HAP-1 (cell line): ENCODE measurements at regions of chrX and their contacts with region 1.

Region 1: DNA sequence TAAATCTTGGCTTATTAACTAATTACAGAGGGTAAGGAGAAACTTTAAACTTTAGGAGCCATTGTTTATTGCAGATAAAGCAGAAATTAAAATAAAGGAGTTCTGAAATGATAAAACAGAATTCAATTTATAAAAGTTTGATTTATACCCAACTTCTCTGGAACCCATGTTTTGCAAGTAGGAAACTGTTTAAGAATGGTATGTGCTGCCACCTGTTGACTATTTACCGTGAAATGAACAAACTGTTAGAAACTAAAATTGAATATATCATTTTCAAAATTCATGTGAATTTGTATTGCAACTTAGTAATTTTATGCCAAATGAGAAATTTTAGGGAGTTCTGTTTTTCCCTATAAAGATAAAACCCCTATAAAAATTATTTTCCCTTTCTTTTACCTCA is 11.0 kb upstream of the TBC1D8B start:
- DNase-seq: no peak
- H3K4me3 ChIP-seq: no peak overlapping the region
- H3K4me1 ChIP-seq: no peaks in the 10 kb centered on the region
- H3K27me3 ChIP-seq: no peaks in the 10 kb centered on the region

Region 2: DNA sequence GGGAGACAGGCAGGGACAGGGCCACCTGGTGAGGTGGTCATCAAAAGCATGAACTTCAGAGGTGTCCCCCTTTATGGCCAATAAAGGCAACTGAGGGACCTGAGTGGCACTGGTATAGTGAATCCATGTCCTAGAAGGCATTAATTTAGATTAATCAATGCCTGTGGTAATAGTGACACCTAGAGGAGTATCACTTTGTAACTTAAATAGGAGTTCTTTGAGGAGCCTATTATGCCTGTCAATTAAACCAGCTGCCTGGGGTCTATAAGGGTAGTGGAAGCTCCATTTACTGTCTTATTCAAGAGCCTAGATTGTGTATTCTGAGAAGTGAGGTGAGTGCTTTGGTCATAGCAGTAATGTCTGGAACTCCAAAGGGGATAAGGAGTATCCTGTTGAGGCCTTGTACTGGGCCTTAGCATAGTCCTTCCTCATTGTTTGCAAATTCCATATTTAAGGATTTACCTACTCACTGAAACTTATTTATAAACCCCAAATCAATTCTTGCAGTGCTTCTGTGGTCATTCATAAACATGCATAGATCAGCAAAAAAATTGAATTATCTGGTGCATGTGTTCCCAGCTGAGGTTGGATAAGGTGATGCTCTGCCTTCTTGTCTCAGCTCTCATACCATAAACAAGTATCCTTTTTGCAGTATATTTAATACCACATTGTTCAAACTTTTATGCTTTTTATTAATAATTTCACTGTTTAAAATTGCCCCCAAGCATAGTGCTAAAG is 393.5 kb before region 1 on chrX:
- in situ Hi-C with region 1: no loop called
- DNase-seq: no peak
- H3K4me3 ChIP-seq: no peak overlapping the region
- H3K4me1 ChIP-seq: no peaks in the 10 kb centered on the region
- H3K27me3 ChIP-seq: no peaks in the 10 kb centered on the region

Region 3: DNA sequence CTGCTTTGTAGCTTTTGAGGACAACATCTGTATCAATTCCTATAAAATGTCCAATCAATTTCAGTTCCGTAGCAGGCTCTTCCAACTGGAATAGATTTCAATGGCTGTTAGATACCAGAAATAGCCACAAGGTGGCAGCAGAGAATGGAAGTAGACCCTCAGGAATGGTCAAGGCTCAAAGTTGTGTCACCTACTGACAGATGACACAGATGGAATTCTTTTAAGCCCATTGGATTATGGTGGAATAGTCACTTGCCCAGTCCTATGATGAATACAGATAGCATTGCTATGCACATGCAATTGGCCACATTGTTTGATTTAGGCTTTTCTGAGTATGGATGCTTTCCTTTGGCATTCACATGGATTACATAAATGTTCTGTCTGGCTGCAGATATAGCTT is 310.2 kb before region 1 on chrX:
- in situ Hi-C with region 1: loop called (anchors 25 kb)
- DNase-seq: peak; percentile 36 to 77
- H3K4me3 ChIP-seq: no peak overlapping the region
- H3K4me1 ChIP-seq: no peaks in the 10 kb centered on the region
- H3K27me3 ChIP-seq: no peaks in the 10 kb centered on the region